ENCODE measurements at regions of chr2 and their contacts with region 1.

Region 1: GRCh38 chr2:53941749-53942148 is 29.0 kb downstream of the PSME4 start:
- DNase-seq: no peak
- ATAC-seq: no peak
- H3K4me3 ChIP-seq: no peak overlapping the region
- H3K4me3 Mint-ChIP-seq: no peak overlapping the region
- H3K27ac ChIP-seq: no peak overlapping the region
- H3K27ac Mint-ChIP-seq: no peak overlapping the region
- H3K4me1 ChIP-seq: peaks cover 0 to 2% of the 10 kb centered on the region in 2 experiments
- H3K4me1 Mint-ChIP-seq: peaks cover 13 to 24% (median 23%) of the 10 kb centered on the region in 3 donors
- H3K27me3 ChIP-seq: no peaks in the 10 kb centered on the region
- H3K27me3 Mint-ChIP-seq: no peaks in the 10 kb centered on the region

Region 2: GRCh38 chr2:54360055-54360792 is 418.5 kb after region 1 on chr2:
- CTCF ChIA-PET with region 1: no interaction called
- POLR2A ChIA-PET with region 1: interaction called in 1 of 2 experiments, 15 read pairs
- DNase-seq: no peak
- ATAC-seq: no peak
- H3K4me3 ChIP-seq: no peak overlapping the region
- H3K4me3 Mint-ChIP-seq: no peak overlapping the region
- H3K27ac ChIP-seq: no peak overlapping the region
- H3K27ac Mint-ChIP-seq: no peak overlapping the region
- H3K4me1 ChIP-seq: no peaks in the 10 kb centered on the region
- H3K4me1 Mint-ChIP-seq: no peaks in the 10 kb centered on the region
- H3K27me3 ChIP-seq: peaks cover 0 to 8% of the 10 kb centered on the region in 2 experiments
- H3K27me3 Mint-ChIP-seq: peaks cover 26 to 34% of the 10 kb centered on the region in 2 donors

Measured in T-cell (primary cell).